Vagina (tissue), 2 donors: ENCODE measurements at regions of chr17 and their contacts with region 1.

Region 1: GRCh38 chr17:60823515-60823914 is 145.9 kb downstream of the BCAS3 start:
- DNase-seq: no peak
- H3K4me3 ChIP-seq: no peak overlapping the region
- H3K27ac ChIP-seq: no peak overlapping the region
- H3K4me1 ChIP-seq: no peaks in the 10 kb centered on the region
- H3K27me3 ChIP-seq: no peaks in the 10 kb centered on the region
- CTCF ChIP-seq: no peak
- POLR2A ChIP-seq: no peak

Region 2: GRCh38 chr17:60769031-60769726 is 54.3 kb before region 1 on chr17:
- intact Hi-C with region 1: loop called (anchors 2 kb)
- DNase-seq: no peak
- H3K4me3 ChIP-seq: no peak overlapping the region
- H3K27ac ChIP-seq: no peak overlapping the region
- H3K4me1 ChIP-seq: no peaks in the 10 kb centered on the region
- H3K27me3 ChIP-seq: no peaks in the 10 kb centered on the region
- CTCF ChIP-seq: no peak
- POLR2A ChIP-seq: no peak